K562 (cell line): ENCODE measurements at regions of chr13 and their contacts with region 1.

Region 1: DNA sequence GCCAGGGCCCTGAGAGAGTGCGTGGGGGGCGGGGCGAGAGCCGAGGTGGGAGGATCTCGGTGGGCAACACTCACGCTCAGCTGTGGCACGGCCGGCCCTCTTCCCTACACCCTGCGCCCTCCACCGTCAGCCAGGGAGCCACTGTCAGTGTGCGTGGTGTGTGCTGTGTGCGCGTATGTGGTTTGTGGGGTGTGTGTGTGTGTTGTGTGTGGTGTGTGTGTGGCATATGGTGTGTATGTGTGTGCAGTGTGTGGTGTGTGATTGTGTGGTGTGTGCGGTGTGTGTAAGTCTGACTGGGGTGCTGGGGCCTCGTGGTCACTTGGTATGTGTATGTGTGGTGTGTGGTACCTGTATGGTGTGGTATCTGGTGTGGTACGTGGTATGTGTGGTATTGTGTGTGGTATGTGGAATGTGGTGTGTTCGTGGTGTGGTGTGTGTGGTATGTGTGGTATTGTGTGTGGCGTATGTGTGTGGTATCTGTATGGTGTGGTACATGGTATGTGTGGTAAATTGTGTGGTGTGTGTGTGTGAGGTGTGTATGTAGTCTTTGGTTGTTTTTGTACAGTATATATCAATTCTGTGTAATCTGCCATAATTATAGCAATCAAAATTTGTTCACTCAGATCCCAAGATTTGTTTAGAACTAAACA is 5.1 kb downstream of the GRK1 start:
- DNase-seq: no peak
- ATAC-seq: no peak
- H3K4me3 ChIP-seq: no peak overlapping the region
- H3K27ac ChIP-seq: no peak overlapping the region
- H3K4me1 ChIP-seq: peaks cover 0 to 18% of the 10 kb centered on the region in 2 experiments; a peak in 2 of 5 replicates
- H3K27me3 ChIP-seq: peaks cover 21 to 39% of the 10 kb centered on the region in 2 experiments; a peak in 3 of 5 replicates
- CTCF ChIP-seq: no peak
- EP300 ChIP-seq: no peak
- POLR2A ChIP-seq: no peak
- RAD21 ChIP-seq: no peak

Region 2: DNA sequence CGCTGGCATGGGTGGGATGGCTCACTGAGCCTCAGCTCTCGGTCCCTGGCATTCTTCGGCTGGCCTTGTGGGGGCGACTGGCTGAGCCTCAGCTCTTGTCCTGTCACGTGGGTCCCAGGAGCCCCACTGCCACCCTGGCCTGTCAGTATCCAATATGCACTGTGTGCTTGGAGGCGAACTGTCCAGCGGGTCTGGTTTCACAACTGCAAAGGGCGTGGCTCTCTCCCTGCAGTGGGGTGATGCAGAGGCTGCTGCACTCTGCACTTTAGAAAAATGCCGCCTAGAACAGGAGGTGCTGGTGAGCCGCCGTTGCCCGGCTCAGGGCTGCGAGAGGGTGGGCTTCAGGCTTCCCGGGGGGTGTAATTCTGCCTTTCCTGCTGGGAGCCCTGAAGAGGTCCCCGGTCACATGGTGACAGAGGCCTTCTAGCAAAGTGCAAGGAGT is 69.9 kb after region 1 on chr13:
- CTCF ChIA-PET with region 1: no interaction called
- POLR2A ChIA-PET with region 1: no interaction called
- in situ Hi-C with region 1: loop called (anchors 5 kb)
- intact Hi-C with region 1: no loop called
- DNase-seq: peak; percentile 27 to 50 (median 39)
- ATAC-seq: peak; percentile 83
- H3K4me3 ChIP-seq: no peak overlapping the region
- H3K27ac ChIP-seq: no peak overlapping the region
- H3K4me1 ChIP-seq: peaks cover 0 to 17% of the 10 kb centered on the region in 2 experiments; a peak in 1 of 5 replicates
- H3K27me3 ChIP-seq: peaks cover 15 to 62% of the 10 kb centered on the region in 2 experiments; a peak in 4 of 5 replicates
- CTCF ChIP-seq: 0 out of 6 replicates have a peak, but pooled peaks of 2 of the 3 experiments have one; percentile 21 to 27
- EP300 ChIP-seq: no peak
- POLR2A ChIP-seq: no peak
- RAD21 ChIP-seq: no peak